GM12878 (cell line): ENCODE measurements at regions of chr13 and their contacts with region 1.

Region 1: GRCh38 chr13:23020223-23020843 is 160.4 kb upstream of the SGCG start:
- DNase-seq: peak; percentile 34
- ATAC-seq: peak; percentile 98
- H3K4me3 ChIP-seq: no peak overlapping the region
- H3K27ac ChIP-seq: no peak overlapping the region
- H3K4me1 ChIP-seq: no peaks in the 10 kb centered on the region
- H3K27me3 ChIP-seq: no peaks in the 10 kb centered on the region
- CTCF ChIP-seq: peak; percentile 75 to 85 (median 82)
- EP300 ChIP-seq: no peak
- POLR2A ChIP-seq: no peak
- RAD21 ChIP-seq: peak; percentile 75

Region 2: GRCh38 chr13:21625366-21625765 is 1395.0 kb before region 1 on chr13:
- CTCF ChIA-PET with region 1: no interaction called
- POLR2A ChIA-PET with region 1: no interaction called
- RAD21 ChIA-PET with region 1: interaction called, 3 read pairs
- SMC1A ChIA-PET with region 1: no interaction called
- in situ Hi-C with region 1: no loop called
- intact Hi-C with region 1: loop called (anchors 10 kb)
- DNase-seq: no peak
- ATAC-seq: peak; percentile 90
- H3K4me3 ChIP-seq: no peak overlapping the region
- H3K27ac ChIP-seq: no peak overlapping the region
- H3K4me1 ChIP-seq: no peaks in the 10 kb centered on the region
- H3K27me3 ChIP-seq: no peaks in the 10 kb centered on the region
- CTCF ChIP-seq: peak; percentile 41 to 66 (median 49)
- EP300 ChIP-seq: no peak
- POLR2A ChIP-seq: no peak
- RAD21 ChIP-seq: peak; percentile 75

Region 3: DNA sequence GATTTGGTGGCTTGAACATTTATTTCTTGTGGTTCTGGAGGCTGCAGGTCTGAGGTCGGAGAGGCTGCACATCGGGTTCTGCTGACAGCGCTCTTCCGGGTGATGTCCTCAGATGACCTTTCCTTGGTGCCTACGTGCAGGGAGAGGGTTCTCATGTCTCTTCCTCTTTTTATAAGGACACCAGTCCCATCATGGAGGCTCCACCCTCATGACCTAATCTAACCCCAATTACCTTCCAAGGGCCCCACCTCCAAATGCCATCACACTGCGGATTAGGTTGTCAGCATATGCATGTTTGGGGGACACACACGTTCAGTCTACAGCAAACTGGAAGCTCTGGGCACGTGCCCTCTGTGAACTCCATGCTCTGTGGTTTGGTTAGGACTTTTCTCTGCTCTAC is 1010.8 kb before region 1 on chr13:
- CTCF ChIA-PET with region 1: no interaction called
- POLR2A ChIA-PET with region 1: no interaction called
- RAD21 ChIA-PET with region 1: no interaction called
- SMC1A ChIA-PET with region 1: no interaction called
- in situ Hi-C with region 1: no loop called
- intact Hi-C with region 1: no loop called
- DNase-seq: no peak
- ATAC-seq: no peak
- H3K4me3 ChIP-seq: no peak overlapping the region
- H3K27ac ChIP-seq: no peak overlapping the region
- H3K4me1 ChIP-seq: no peaks in the 10 kb centered on the region
- H3K27me3 ChIP-seq: no peaks in the 10 kb centered on the region
- CTCF ChIP-seq: no peak
- EP300 ChIP-seq: no peak
- POLR2A ChIP-seq: no peak
- RAD21 ChIP-seq: no peak

Region 4: GRCh38 chr13:23321535-23322241 is 301.4 kb after region 1 on chr13:
- CTCF ChIA-PET with region 1: interaction called, 4 read pairs
- POLR2A ChIA-PET with region 1: no interaction called
- RAD21 ChIA-PET with region 1: interaction called, 5 read pairs
- SMC1A ChIA-PET with region 1: interaction called, 5 read pairs
- in situ Hi-C with region 1: no loop called
- intact Hi-C with region 1: loop called (anchors 10 kb)
- DNase-seq: peak; percentile 35
- ATAC-seq: peak; percentile 93
- H3K4me3 ChIP-seq: peak overlapping the region; percentile 53
- H3K27ac ChIP-seq: peak overlapping the region; percentile 26
- H3K4me1 ChIP-seq: peaks cover 26% of the 10 kb centered on the region
- H3K27me3 ChIP-seq: no peaks in the 10 kb centered on the region
- CTCF ChIP-seq: no peak
- EP300 ChIP-seq: no peak
- POLR2A ChIP-seq: no peak
- RAD21 ChIP-seq: no peak